Activated CD8-positive, alpha-beta T cell treated with anti-CD3 and anti-CD28 coated beads, Interleukin-2, amount 10 ng/mL, durations not matched to agents 7 days and 5 days (primary cell): ENCODE measurements at regions of chr10 and their contacts with region 1.

Region 1: GRCh38 chr10:119750391-119751230 is 24.8 kb downstream of the INPP5F start:
- DNase-seq: peak; percentile 72
- ATAC-seq: peak; percentile 75
- H3K4me3 Mint-ChIP-seq: no peak overlapping the region
- H3K27ac Mint-ChIP-seq: no peak overlapping the region
- H3K4me1 Mint-ChIP-seq: peaks cover 1% of the 10 kb centered on the region
- H3K27me3 Mint-ChIP-seq: no peaks in the 10 kb centered on the region

Region 2: GRCh38 chr10:119725828-119726675 is 24.6 kb before region 1 on chr10 and contains the start of gene INPP5F:
- CTCF ChIA-PET with region 1: interaction called, 23 read pairs
- POLR2A ChIA-PET with region 1: no interaction called
- DNase-seq: peak; percentile 99
- ATAC-seq: peak; percentile 94
- H3K4me3 Mint-ChIP-seq: peak within 1 kb of the TSS; percentile 87
- H3K27ac Mint-ChIP-seq: peak within 1 kb of the TSS; percentile 81
- H3K4me1 Mint-ChIP-seq: peaks cover 46% of the 10 kb centered on the region
- H3K27me3 Mint-ChIP-seq: no peaks in the 10 kb centered on the region
- total RNA-seq, gene INPP5F: 15.9 to 17.6 TPM

Region 3: GRCh38 chr10:119737827-119738226 is 12.8 kb before region 1 on chr10:
- CTCF ChIA-PET with region 1: interaction called, 44 read pairs
- POLR2A ChIA-PET with region 1: interaction called, 4 read pairs
- DNase-seq: no peak
- ATAC-seq: peak; percentile 51
- H3K4me3 Mint-ChIP-seq: no peak overlapping the region
- H3K27ac Mint-ChIP-seq: peak overlapping the region; percentile 39
- H3K4me1 Mint-ChIP-seq: peaks cover 29% of the 10 kb centered on the region
- H3K27me3 Mint-ChIP-seq: no peaks in the 10 kb centered on the region

Region 4: GRCh38 chr10:119761106-119761505 is 10.5 kb after region 1 on chr10:
- CTCF ChIA-PET with region 1: interaction called, 18 read pairs
- POLR2A ChIA-PET with region 1: no interaction called
- DNase-seq: no peak
- ATAC-seq: no peak
- H3K4me3 Mint-ChIP-seq: no peak overlapping the region
- H3K27ac Mint-ChIP-seq: no peak overlapping the region
- H3K4me1 Mint-ChIP-seq: peaks cover 3% of the 10 kb centered on the region
- H3K27me3 Mint-ChIP-seq: no peaks in the 10 kb centered on the region

Region 5: DNA sequence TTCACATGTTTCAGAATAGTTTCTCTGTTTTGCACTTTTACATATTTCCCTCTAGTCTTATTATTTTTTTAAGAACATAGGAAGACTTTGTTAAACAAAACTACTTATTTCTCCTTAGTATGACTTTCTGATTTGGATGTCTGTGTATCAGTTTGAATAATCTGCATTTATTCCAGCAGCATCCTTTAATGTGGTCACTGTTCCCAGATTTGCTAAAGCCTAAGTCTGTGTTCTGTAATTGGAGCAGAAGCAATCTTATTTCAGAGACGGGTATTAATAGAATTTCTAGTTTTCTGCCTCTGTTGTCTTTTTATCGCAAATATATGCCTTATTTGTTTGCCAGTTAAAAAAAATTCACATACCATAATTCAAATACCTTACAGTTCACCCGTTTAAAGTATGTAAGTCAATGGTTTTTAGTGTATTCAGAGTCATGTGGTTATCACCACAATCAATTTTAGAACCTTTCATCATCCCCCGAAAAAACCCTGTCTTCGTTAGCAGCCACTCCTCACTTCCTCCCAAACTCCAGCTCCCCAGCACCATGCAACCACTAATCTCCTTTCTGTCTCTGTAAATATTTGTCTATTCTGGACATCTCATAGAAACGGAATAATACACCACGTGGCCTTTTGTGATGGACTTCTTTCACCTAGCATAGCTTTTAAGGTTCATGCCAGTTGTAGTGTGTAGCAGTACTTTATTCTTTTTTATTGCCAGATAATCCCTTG is 33.9 kb after region 1 on chr10:
- CTCF ChIA-PET with region 1: interaction called, 15 read pairs
- POLR2A ChIA-PET with region 1: no interaction called
- DNase-seq: peak; percentile 41
- ATAC-seq: peak; percentile 87
- H3K4me3 Mint-ChIP-seq: peak overlapping the region; percentile 41
- H3K27ac Mint-ChIP-seq: peak overlapping the region; percentile 73
- H3K4me1 Mint-ChIP-seq: peaks cover 44% of the 10 kb centered on the region
- H3K27me3 Mint-ChIP-seq: no peaks in the 10 kb centered on the region

Region 6: GRCh38 chr10:119834188-119834587 is 83.6 kb after region 1 on chr10:
- CTCF ChIA-PET with region 1: interaction called, 15 read pairs
- POLR2A ChIA-PET with region 1: no interaction called
- DNase-seq: no peak
- ATAC-seq: peak; percentile 36
- H3K4me3 Mint-ChIP-seq: no peak overlapping the region
- H3K27ac Mint-ChIP-seq: peak overlapping the region; percentile 68
- H3K4me1 Mint-ChIP-seq: peaks cover 15% of the 10 kb centered on the region
- H3K27me3 Mint-ChIP-seq: no peaks in the 10 kb centered on the region

Region 7: DNA sequence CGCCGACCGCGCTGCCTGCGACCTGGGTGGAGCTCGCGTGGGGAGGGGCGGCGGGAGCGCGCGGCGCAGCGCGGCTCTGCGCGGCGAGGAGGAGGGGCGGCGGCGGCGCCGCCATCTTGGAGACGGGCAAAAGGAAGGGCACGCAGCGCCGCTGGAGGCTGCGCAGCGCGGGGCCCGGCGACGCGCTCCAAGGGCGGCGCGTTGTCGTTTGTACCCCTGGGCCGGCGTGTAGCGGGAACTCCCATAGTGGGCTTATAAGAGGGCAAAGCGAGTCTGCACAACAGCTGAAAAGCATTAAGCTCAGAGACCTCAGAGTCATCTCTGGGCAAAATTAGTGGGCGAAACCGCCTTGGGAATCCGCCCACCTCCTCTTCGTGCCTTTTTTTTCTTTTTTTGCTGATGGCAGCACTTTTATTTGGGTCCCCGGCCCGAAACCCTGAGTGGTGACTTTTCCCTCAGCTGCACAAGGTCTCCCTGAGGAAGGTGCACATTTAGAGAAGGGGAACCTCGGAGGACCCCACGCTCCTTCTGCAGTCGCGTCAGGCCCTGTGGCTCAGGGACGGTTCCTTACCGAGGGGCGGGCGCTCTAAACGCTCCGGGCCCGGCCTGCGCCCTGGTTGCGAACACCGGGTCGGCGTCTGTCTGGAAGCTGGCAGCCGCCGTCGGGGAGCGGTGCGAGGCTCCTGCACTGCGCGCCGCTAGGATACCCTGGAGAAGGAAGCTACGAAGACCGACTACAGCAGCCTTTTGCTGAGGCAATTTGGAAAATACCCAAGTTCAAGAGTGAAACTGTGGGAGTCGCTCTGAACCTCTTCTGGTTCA is 122.5 kb after region 1 on chr10:
- CTCF ChIA-PET with region 1: interaction called, 20 read pairs
- POLR2A ChIA-PET with region 1: no interaction called
- DNase-seq: peak; percentile 91
- ATAC-seq: peak; percentile 93
- H3K4me3 Mint-ChIP-seq: peak overlapping the region; percentile 82
- H3K27ac Mint-ChIP-seq: peak overlapping the region; percentile 86
- H3K4me1 Mint-ChIP-seq: peaks cover 35% of the 10 kb centered on the region
- H3K27me3 Mint-ChIP-seq: no peaks in the 10 kb centered on the region

Region 8: GRCh38 chr10:119997429-119997828 is 246.8 kb after region 1 on chr10:
- CTCF ChIA-PET with region 1: no interaction called
- POLR2A ChIA-PET with region 1: no interaction called
- DNase-seq: no peak
- ATAC-seq: no peak
- H3K4me3 Mint-ChIP-seq: no peak overlapping the region
- H3K27ac Mint-ChIP-seq: no peak overlapping the region
- H3K4me1 Mint-ChIP-seq: no peaks in the 10 kb centered on the region
- H3K27me3 Mint-ChIP-seq: peaks cover 28% of the 10 kb centered on the region